Right ventricle myocardium inferior (tissue), 1 donor: ENCODE measurements at regions of chr6 and their contacts with region 1.

Region 1: DNA sequence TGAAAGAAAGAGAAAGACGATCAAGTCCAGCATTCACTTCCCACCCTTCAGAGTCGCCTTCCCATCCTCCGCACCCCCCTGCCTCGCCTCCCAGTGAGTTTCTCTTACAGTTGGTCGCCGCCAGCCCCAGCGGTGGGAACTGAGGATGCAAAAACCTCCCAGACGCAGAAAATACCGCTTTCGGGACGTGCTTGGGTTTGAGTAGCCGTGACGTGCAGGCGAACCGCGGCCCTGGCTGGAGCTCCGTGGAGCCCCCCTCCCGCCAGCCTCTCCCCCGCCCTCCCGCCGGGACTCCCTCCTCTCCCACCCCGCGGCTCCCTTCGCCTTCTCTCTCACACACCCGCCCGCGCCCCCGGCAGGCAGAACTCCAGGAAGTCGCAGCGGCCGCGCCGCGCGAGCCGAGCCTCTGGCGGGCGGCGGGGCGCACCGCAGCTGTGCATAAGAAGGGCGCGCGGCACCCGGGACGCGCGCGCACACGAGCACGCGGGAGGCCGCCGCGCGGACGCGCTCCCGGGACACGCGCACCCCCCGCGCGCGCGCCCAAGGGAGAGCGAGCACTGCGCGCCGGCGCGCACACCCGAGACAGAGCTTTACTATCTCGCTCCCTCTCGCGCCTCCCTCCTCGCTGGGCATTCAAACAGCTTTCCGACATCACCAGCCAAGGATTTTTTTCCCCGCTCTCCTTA is at the start of gene ADGRB3:
- DNase-seq: peak; percentile 91
- ATAC-seq: peak; percentile 96
- total RNA-seq, gene ADGRB3: 1.7 TPM

Region 2: GRCh38 chr6:68615938-68616337 is 18.9 kb before region 1 on chr6:
- intact Hi-C with region 1: no loop called
- DNase-seq: no peak
- ATAC-seq: no peak

Region 3: GRCh38 chr6:68778356-68779020 is 143.6 kb after region 1 on chr6:
- intact Hi-C with region 1: loop called (anchors 2 kb)
- DNase-seq: no peak
- ATAC-seq: peak; percentile 84

Region 4: DNA sequence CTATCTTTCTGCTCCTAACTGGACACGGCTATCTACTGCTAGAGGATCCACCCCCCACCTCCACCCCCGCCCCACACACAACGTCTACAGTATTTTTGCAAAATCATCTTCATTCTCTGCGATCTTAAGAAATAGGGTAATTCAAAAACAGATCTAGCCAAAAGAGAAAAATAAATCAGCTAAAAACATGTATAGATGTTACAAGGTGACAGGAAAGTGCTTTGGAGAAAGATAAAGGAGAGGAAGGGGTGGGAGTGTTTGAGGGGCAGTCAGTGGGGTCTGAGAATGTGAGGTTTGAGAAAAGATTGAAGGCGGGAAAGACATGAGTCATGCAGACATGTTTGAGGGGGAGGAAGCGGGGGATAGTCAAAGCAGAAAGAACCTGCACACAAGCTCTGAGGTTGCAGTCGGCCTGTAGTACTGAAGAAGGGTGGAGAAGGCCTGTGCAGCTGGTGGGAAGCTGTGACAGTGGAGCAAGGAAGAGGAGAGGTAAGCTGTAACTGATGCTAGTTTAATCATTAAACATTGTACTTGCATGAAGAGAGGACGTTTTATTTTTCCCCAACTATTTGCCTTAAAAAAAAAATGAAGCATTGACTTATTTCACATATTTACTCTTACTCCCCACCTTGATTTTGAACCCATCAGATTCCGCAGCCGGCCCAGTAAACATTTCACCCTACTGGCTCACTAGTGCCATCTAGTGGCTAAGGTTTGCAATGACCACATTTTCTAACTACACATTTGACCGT is 332.9 kb after region 1 on chr6:
- intact Hi-C with region 1: loop called (anchors 5 kb)
- DNase-seq: peak; percentile 63
- ATAC-seq: peak; percentile 48

Region 5: GRCh38 chr6:70107852-70108629 is 1473.2 kb after region 1 on chr6:
- intact Hi-C with region 1: loop called (anchors 5 kb)
- DNase-seq: no peak
- ATAC-seq: no peak